Heart left ventricle (tissue), 16 donors: ENCODE measurements at regions of chr16 and their contacts with region 1.

Region 1: DNA sequence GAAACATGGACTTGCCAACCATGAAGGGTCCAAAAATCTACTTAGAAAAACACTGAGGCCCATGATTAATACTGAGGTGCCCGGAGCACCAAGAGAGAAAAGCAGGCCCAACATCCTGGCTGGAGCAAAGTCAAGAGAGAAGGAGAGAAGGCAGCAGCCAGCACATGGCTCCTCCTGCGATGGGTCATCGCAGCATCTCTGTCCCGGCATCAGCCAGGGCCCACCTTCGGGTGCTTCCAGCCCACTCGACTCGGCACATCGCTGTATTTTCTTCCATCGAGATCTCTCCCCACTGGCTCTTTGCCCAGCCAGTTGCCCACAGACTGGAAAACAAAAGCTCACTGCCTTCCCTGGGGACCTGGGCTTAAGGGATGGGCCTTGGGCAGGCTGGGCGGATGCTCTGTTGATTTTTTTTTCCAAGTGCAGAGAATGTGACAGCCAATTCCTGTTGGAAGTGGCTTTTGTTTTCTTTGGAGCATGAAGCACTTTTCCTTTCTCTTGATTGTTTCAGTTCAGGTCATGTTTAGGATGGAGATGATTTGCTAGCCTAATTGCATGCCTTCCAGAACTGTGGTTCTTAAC is 58.1 kb downstream of the CYB5B start:
- DNase-seq: peak; percentile 80 to 87 (median 83)
- ATAC-seq: peak; percentile 67 to 91 (median 82)
- H3K4me3 ChIP-seq: peak overlapping the region in 9 of 12 donors; percentile 3 to 42 (median 30)
- H3K27ac ChIP-seq: peak overlapping the region; percentile 68 to 94 (median 90)
- H3K4me1 ChIP-seq: peaks cover 0 to 29% (median 12%) of the 10 kb centered on the region in 12 donors
- H3K27me3 ChIP-seq: peaks cover 0 to 27% (median 0%) of the 10 kb centered on the region in 9 donors
- CTCF ChIP-seq: no peak
- POLR2A ChIP-seq: no peak

Region 2: DNA sequence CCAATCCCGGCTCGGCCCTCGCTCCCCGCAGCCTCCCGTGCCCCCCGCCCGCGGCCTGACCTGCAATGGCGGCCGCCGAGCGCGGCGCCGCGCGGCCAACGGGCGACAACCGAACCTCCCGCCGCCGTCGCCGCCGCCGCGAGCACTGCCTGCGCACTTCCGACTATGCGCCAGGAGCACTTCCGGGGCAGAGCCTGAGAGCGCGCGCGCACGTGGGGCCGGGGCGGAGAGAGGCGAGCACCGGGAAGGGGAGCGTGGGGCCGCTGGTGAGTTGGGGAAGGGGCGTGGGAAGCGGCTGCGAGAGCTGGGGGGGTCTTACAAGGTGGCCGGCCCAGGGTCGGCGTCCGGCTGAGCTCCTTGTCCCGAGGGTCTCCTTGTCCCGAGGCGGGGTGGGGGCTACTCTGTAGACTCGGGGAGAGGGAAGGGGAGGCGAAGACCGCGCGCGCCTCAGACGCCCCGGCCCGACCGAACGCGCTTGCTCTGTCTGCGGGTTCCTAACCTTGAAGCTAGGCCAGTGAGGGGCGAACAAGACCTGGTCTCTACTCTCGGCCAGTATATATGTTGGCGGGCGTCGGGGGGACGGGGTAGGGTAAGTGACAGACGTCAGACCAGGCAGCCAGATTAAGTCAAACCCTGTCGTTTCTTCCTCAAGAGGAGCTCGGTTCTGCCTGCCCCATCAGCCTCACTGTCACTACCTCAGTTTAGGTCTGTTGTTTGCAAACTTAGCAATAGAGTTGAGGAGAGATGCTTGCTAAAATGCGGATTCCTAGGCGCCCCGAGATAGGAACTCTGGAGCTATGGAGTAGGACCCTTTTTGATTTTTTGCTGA is 349.9 kb before region 1 on chr16 and contains the starts of genes CHTF8 and UTP4:
- intact Hi-C with region 1: no loop called
- DNase-seq: peak; percentile 88 to 94 (median 90)
- ATAC-seq: peak; percentile 90 to 96 (median 94)
- H3K4me3 ChIP-seq: peak within 1 kb of the TSS; percentile 77 to 99 (median 89)
- H3K27ac ChIP-seq: peak within 1 kb of the TSS; percentile 87 to 96 (median 92)
- H3K4me1 ChIP-seq: peaks cover 0 to 36% (median 19%) of the 10 kb centered on the region in 12 donors
- H3K27me3 ChIP-seq: no peaks in the 10 kb centered on the region
- CTCF ChIP-seq: no peak
- POLR2A ChIP-seq: peak; percentile 62 to 76
- total RNA-seq, gene CHTF8: 31.5 to 79.7 (median 57.2) TPM
- total RNA-seq, gene UTP4: 12.8 to 38.2 (median 28.3) TPM

Region 3: DNA sequence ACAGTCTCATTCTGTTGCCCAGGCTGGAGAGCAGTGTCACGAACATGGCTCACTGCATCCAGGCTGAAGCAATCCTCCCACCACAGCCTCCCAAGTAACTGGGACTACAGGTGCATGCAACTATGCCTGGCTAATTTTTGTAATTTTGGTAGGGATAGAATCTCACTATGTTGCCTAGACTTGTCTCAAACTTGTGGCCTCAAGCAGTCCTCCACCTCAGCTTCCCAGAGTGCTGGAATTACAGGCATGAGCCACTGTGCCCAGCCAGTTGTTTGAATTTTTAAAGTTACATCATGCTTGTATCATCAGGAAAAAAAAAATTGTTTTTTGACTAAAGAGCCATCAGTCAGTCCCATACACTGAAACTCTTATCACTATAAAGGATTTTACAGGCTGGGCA is 188.4 kb before region 1 on chr16:
- intact Hi-C with region 1: no loop called
- DNase-seq: no peak
- ATAC-seq: no peak
- H3K4me3 ChIP-seq: no peak overlapping the region
- H3K27ac ChIP-seq: no peak overlapping the region
- H3K4me1 ChIP-seq: no peaks in the 10 kb centered on the region
- H3K27me3 ChIP-seq: no peaks in the 10 kb centered on the region
- CTCF ChIP-seq: no peak
- POLR2A ChIP-seq: no peak

Region 4: GRCh38 chr16:69404275-69404805 is 78.2 kb before region 1 on chr16:
- intact Hi-C with region 1: loop called in 4 of 10 experiments (anchors 1 to 5 kb)
- DNase-seq: peak in 2 of 5 donors; percentile 35 to 45
- ATAC-seq: peak; percentile 71 to 88 (median 78)
- H3K4me3 ChIP-seq: peak overlapping the region in 2 of 12 donors; percentile 8 to 22
- H3K27ac ChIP-seq: peak overlapping the region; percentile 45 to 86 (median 76)
- H3K4me1 ChIP-seq: peaks cover 0 to 36% (median 12%) of the 10 kb centered on the region in 12 donors
- H3K27me3 ChIP-seq: no peaks in the 10 kb centered on the region
- CTCF ChIP-seq: no peak
- POLR2A ChIP-seq: no peak

Region 5: DNA sequence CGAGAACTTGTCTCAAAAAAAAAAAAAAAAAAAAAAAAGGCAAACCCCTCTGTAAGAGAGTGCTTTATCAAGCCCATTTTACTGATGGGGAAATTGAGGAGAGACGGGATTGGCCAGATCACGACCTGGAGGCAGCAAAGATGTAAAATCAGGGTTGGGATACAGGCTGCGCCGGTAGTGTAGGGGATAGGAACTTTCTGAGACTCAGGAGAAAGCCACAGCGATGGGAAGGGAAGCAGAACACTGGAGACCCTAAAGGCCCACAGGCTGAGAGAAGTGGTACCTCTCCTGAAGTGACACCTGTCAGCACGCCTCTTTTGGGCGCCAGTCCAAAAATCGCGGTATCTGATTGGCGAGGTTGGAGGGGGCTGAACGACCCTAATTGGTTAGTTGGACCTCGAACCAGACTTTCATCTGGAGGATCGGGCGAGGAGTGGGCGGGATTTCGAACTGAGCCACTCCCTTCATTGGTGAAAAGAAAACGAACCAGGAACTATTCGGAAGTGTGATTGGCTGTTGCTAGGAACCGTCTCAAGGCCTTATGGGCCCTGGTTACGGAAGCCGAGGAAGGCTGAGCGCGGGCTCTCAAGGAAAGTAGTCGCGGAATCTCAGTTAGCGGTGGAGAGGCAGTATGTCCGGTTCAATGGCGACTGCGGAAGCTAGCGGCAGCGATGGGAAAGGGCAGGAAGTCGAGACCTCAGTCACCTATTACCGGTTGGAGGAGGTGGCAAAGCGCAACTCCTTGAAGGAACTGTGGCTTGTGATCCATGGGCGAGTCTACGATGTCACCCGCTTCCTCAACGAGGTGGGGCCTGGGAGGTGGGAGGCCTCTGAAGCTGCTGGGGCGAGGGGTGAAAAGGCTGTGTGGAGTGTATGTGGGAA is 58.2 kb before region 1 on chr16 and contains the start of gene CYB5B:
- intact Hi-C with region 1: loop called in 1 of 10 experiments (anchors 10 kb)
- DNase-seq: peak; percentile 91 to 96 (median 95)
- ATAC-seq: peak; percentile 99 to 100 (median 99)
- H3K4me3 ChIP-seq: peak within 1 kb of the TSS; percentile 64 to 91 (median 76)
- H3K27ac ChIP-seq: peak within 1 kb of the TSS; percentile 54 to 86 (median 80)
- H3K4me1 ChIP-seq: peaks cover 0 to 17% (median 11%) of the 10 kb centered on the region in 12 donors
- H3K27me3 ChIP-seq: no peaks in the 10 kb centered on the region
- CTCF ChIP-seq: peak in 1 of 12 donors; percentile 3
- POLR2A ChIP-seq: peak in 1 of 2 donors; percentile 66
- total RNA-seq, gene CYB5B: 31.1 to 89.2 (median 65.0) TPM

Region 6: GRCh38 chr16:69448470-69449193 is 33.9 kb before region 1 on chr16:
- intact Hi-C with region 1: loop called in 1 of 10 experiments (anchors 2 kb)
- DNase-seq: no peak
- ATAC-seq: peak in 2 of 4 donors; percentile 32 to 33
- H3K4me3 ChIP-seq: no peak overlapping the region
- H3K27ac ChIP-seq: peak overlapping the region; percentile 41 to 83 (median 57)
- H3K4me1 ChIP-seq: peaks cover 0 to 55% (median 34%) of the 10 kb centered on the region in 12 donors
- H3K27me3 ChIP-seq: no peaks in the 10 kb centered on the region
- CTCF ChIP-seq: no peak
- POLR2A ChIP-seq: no peak

Region 7: DNA sequence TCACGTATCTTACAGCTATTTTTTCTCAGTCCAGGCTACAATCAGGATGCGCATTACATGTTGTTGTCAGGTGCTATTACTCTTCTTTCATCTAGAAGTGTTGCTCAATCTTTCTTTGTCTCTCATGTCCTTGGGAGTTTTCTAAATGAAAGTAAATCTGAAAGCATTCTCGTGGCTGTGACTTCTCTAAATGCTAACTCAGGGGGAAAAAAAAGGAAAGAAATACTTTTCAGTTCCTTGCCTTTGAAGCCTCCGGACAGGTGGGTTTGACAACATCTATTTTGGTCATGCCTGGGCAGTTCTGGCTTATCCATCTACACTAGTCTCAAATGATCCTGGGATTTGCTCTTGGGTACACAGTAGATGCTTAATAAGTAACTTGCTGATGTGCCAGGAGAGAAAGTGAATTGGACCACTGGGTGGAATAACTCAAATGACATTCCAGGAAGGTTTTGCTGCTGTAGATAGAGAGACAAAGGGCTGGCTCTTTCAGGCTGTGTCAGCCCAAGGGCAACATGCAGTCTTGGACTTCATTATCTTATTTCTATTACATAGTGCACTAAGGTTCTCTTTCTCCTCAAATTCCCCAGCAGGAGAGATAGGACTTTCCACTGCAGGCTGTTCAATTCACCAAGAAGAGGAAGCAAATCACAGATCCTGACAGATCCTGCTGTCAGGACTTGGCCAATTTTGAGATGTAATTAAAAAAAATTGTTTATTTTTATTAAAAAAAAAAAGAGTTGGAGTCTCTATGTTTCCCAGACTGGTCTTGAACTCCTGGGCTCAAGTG is 19.6 kb after region 1 on chr16:
- intact Hi-C with region 1: no loop called
- DNase-seq: no peak
- ATAC-seq: no peak
- H3K4me3 ChIP-seq: no peak overlapping the region
- H3K27ac ChIP-seq: no peak overlapping the region
- H3K4me1 ChIP-seq: peaks cover 0 to 8% (median 0%) of the 10 kb centered on the region in 12 donors
- H3K27me3 ChIP-seq: peaks cover 0 to 17% (median 0%) of the 10 kb centered on the region in 9 donors
- CTCF ChIP-seq: no peak
- POLR2A ChIP-seq: no peak

Region 8: DNA sequence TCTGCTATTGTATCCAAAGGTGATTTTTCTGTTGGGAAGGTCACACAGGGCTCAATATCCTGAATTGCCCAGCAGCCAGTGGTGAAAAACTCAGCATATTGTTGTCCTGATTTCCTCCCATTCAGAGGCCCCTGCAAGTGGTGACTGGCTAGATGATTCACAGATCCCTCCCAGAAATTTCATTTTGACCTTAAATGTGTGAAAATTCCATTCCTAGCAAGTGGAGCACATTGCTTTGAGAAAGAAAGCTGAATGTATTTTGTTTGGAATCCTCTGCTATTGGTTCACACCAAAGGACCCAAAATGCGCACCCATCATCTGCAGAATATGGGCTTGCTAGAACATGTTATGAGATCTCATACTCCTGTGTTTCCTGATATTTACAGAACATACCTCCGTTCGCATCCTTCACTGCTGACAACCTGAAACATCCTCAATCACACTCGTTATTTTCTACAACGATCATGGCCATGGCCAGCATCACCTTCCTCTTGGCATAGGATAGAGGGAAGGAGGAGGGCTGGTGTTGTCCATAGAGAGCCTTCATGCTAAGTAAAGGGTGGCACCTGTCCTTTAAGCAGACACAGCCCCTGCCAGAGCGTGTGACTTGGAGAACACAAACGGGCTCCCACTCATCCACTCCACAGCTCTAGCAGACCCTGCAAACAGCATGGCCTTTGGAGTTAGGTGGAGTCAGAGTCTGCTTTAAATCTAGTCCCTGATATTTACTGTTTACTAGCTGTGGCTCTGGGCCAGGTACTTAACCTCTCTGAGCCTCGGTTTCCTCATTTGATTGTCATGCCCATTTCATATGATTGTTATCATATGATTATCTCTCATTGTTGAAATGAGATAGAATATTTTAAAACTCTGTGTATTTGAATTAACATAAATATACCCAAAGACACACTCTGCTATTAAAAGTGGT is 52.9 kb after region 1 on chr16:
- intact Hi-C with region 1: loop called in 2 of 10 experiments (anchors 2 to 10 kb)
- DNase-seq: no peak
- ATAC-seq: no peak
- H3K4me3 ChIP-seq: no peak overlapping the region
- H3K27ac ChIP-seq: no peak overlapping the region
- H3K4me1 ChIP-seq: peaks cover 0 to 31% (median 0%) of the 10 kb centered on the region in 12 donors
- H3K27me3 ChIP-seq: peaks cover 0 to 4% (median 0%) of the 10 kb centered on the region in 9 donors
- CTCF ChIP-seq: no peak
- POLR2A ChIP-seq: no peak

Region 9: GRCh38 chr16:69555437-69555836 is 72.9 kb after region 1 on chr16:
- intact Hi-C with region 1: loop called in 2 of 10 experiments (anchors 5 to 10 kb)
- DNase-seq: no peak
- ATAC-seq: no peak
- H3K4me3 ChIP-seq: no peak overlapping the region
- H3K27ac ChIP-seq: no peak overlapping the region
- H3K4me1 ChIP-seq: peaks cover 0 to 6% (median 0%) of the 10 kb centered on the region in 12 donors
- H3K27me3 ChIP-seq: peaks cover 0 to 3% (median 0%) of the 10 kb centered on the region in 9 donors
- CTCF ChIP-seq: no peak
- POLR2A ChIP-seq: no peak

Region 10: GRCh38 chr16:69651217-69651616 is 168.7 kb after region 1 on chr16:
- intact Hi-C with region 1: no loop called
- DNase-seq: no peak
- ATAC-seq: no peak
- H3K4me3 ChIP-seq: no peak overlapping the region
- H3K27ac ChIP-seq: no peak overlapping the region
- H3K4me1 ChIP-seq: no peaks in the 10 kb centered on the region
- H3K27me3 ChIP-seq: no peaks in the 10 kb centered on the region
- CTCF ChIP-seq: no peak
- POLR2A ChIP-seq: no peak